ENCODE measurements at regions of chr20 and their contacts with region 1.

Region 1: DNA sequence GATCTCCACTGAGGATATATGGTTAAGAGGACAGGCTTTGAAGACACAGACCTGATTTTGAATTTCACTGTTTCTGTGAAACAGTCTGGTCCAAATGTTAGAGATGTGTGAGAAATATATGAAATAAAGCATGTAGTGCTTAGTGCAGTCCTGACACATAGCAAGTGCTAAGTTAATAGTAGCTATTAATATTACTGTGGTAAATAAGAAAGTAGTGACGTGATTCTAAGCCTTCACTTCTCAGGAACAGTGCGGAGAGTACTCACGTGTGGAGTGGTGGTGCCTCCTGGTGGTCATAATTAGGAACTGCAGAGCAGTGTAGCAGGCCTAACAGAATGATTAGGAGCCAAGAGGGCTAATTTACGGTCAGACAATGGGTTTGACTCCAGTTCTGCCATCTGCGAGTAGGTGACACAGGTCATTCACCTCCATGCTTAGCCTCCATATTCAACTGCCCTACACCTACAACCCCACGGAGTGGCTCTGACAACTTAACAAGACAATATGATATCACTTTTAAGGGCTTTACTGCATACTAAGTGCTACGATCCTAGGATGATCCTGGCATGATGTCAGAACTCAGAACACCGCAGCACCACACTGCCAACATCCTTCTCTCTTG is 106.2 kb downstream of the JPH2 start:
- DNase-seq: peak; percentile 72 to 92
- ATAC-seq: peak; percentile 96 to 99 (median 99)
- H3K4me3 ChIP-seq: no peak overlapping the region
- H3K4me3 Mint-ChIP-seq: no peak overlapping the region
- H3K27ac ChIP-seq: no peak overlapping the region
- H3K27ac Mint-ChIP-seq: no peak overlapping the region
- H3K4me1 ChIP-seq: peaks cover 4% of the 10 kb centered on the region
- H3K4me1 Mint-ChIP-seq: no peaks in the 10 kb centered on the region
- H3K27me3 ChIP-seq: no peaks in the 10 kb centered on the region
- H3K27me3 Mint-ChIP-seq: peaks cover 17 to 41% of the 10 kb centered on the region in 2 donors
- CTCF ChIP-seq: peak; percentile 99

Region 2: GRCh38 chr20:43537921-43538877 is 542.6 kb before region 1 on chr20:
- intact Hi-C with region 1: loop called (anchors 5 kb)
- DNase-seq: peak; percentile 29 to 66
- ATAC-seq: peak; percentile 53 to 70 (median 62)
- H3K4me3 ChIP-seq: no peak overlapping the region
- H3K4me3 Mint-ChIP-seq: no peak overlapping the region
- H3K27ac ChIP-seq: no peak overlapping the region
- H3K27ac Mint-ChIP-seq: no peak overlapping the region
- H3K4me1 ChIP-seq: no peaks in the 10 kb centered on the region
- H3K4me1 Mint-ChIP-seq: peaks cover 0 to 5% of the 10 kb centered on the region in 2 donors
- H3K27me3 ChIP-seq: no peaks in the 10 kb centered on the region
- H3K27me3 Mint-ChIP-seq: peaks cover 0 to 2% of the 10 kb centered on the region in 2 donors
- CTCF ChIP-seq: peak; percentile 76

Region 3: DNA sequence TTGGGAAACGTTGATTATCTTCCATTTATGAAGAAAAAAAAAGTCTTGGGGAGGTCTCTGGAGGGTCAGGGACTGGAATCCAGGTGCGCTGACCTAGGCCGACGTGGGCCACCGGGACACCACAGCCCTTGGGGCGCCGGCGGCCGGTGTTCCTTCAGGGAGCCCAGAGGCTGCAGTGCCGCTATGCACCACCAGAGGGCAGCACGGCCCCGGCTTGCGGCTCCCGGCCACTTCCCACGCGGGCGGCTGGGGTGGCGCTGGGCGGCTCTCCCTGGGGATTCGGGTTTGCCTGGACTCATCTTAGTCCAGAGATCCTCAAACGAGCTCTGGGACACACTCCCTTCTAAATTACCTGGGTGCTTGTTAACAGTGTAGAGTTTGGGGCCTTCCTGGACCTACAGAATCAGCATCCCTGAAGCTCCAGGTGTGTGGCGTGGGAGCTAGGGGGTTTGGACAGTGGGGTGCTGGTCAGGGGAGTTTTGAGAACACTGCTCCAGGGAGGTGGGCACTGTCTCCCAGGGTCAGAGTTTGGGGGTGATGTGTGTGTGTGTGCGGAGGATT is 330.9 kb before region 1 on chr20:
- intact Hi-C with region 1: loop called (anchors 1 kb)
- DNase-seq: peak; percentile 85
- ATAC-seq: peak; percentile 66 to 79 (median 70)
- H3K4me3 ChIP-seq: no peak overlapping the region
- H3K4me3 Mint-ChIP-seq: no peak overlapping the region
- H3K27ac ChIP-seq: no peak overlapping the region
- H3K27ac Mint-ChIP-seq: no peak overlapping the region
- H3K4me1 ChIP-seq: peaks cover 36% of the 10 kb centered on the region
- H3K4me1 Mint-ChIP-seq: peaks cover 30 to 33% of the 10 kb centered on the region in 2 donors
- H3K27me3 ChIP-seq: peaks cover 26% of the 10 kb centered on the region
- H3K27me3 Mint-ChIP-seq: peaks cover 42 to 58% of the 10 kb centered on the region in 2 donors
- CTCF ChIP-seq: peak; percentile 99

Region 4: DNA sequence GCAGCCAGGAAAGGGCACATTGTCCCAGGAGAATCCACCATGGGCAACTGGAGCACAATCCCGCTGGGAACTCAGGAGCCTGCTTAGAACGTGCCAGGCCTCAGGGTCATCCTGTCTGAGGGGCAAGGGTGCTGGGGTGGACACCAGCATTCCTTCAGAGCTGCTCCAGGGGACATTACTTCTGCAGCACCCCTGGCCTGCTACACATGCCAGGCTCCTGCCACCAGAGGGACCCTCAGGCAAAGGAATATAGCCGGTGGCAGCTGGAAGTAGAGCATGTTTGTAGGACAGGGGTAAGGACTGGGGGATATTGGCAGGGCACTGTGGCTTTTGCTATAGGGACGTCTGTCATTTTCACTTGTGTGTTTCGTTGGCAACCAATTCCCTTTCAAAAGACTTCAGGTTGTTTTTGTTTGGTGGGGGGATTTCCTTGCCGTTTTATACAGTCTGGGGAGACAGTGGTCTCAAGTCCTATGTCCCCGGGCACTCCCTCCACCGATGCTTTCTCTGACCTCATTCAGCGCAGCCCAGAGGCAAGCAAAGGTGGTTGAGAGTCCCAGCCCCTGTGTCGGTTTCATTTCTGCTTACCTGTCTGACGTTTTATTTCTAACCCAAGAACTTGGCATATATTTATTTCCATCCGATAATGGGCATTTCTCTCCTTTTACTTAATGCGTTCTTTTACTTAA is 24.6 kb before region 1 on chr20:
- intact Hi-C with region 1: loop called (anchors 1 kb)
- DNase-seq: peak; percentile 19 to 83
- ATAC-seq: peak; percentile 73 to 81 (median 74)
- H3K4me3 ChIP-seq: no peak overlapping the region
- H3K4me3 Mint-ChIP-seq: no peak overlapping the region
- H3K27ac ChIP-seq: no peak overlapping the region
- H3K27ac Mint-ChIP-seq: no peak overlapping the region
- H3K4me1 ChIP-seq: no peaks in the 10 kb centered on the region
- H3K4me1 Mint-ChIP-seq: peaks cover 0 to 6% of the 10 kb centered on the region in 2 donors
- H3K27me3 ChIP-seq: no peaks in the 10 kb centered on the region
- H3K27me3 Mint-ChIP-seq: peaks cover 36 to 42% of the 10 kb centered on the region in 2 donors
- CTCF ChIP-seq: peak; percentile 19